ENCODE measurements at regions of chr3 and their contacts with region 1.

Region 1: DNA sequence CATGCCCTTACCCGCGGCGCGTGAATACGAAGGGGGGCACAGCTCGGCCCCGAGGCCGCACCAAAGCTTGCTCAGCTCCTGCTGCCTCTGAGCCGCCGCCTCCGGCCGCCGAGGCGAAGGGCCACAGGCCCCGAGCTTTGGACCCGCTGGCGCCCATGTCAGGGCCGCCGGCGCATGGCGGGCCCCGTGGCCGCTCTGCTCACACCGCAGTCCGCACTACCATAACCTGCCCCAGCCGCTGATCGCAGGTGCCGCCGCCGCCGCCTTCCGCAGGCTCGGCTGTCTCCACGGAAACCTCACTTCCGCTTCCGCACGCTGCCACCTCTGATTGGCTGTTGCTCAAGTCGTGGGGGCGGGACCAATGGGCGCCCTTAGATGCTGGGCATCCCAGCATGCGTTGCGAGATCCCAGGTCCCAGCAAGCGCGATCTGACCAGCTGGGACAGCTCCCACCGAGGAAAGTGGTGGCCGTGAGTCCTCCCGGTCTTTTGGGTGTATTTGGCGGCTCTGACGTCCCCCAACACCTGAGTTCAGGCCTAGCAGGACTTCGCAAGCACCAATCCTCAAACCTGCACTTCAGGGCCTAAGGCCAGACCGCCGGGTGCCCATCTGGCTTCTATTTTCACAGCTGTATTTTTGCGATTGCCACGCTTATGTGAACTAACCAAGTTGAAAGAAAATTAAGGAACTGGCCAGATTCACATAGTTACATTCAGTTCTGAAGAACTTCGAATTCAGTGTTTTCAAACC is at the start of gene TUSC2:
- DNase-seq: peak; percentile 97 to 98
- H3K4me3 ChIP-seq: peak within 1 kb of the TSS; percentile 70
- H3K4me1 ChIP-seq: peaks cover 6% of the 10 kb centered on the region
- H3K27me3 ChIP-seq: no peaks in the 10 kb centered on the region

Region 2: GRCh38 chr3:50292159-50293078 is 35.7 kb before region 1 on chr3 and contains the start of gene IFRD2:
- in situ Hi-C with region 1: loop called (anchors 5 kb)
- DNase-seq: peak; percentile 97 to 98
- H3K4me3 ChIP-seq: peak within 1 kb of the TSS; percentile 85
- H3K4me1 ChIP-seq: peaks cover 4% of the 10 kb centered on the region
- H3K27me3 ChIP-seq: no peaks in the 10 kb centered on the region

Region 3: GRCh38 chr3:50648313-50648712 is 320.2 kb after region 1 on chr3:
- in situ Hi-C with region 1: no loop called
- DNase-seq: peak in 1 of 2 experiments; percentile 28
- H3K4me3 ChIP-seq: no peak overlapping the region
- H3K4me1 ChIP-seq: no peaks in the 10 kb centered on the region
- H3K27me3 ChIP-seq: no peaks in the 10 kb centered on the region